ENCODE measurements at regions of chr16 and their contacts with region 1.

Region 1: GRCh38 chr16:67226804-67227557 is at the start of gene TMEM208:
- DNase-seq: peak; percentile 96 to 99 (median 98)
- ATAC-seq: peak; percentile 98
- H3K4me3 ChIP-seq: peak within 1 kb of the TSS; percentile 98
- H3K27ac ChIP-seq: peak within 1 kb of the TSS; percentile 74
- H3K4me1 ChIP-seq: peaks cover 18 to 20% of the 10 kb centered on the region in 2 experiments
- H3K27me3 ChIP-seq: no peaks in the 10 kb centered on the region
- CTCF ChIP-seq: peak in 2 of 3 experiments; percentile 27 to 28; a peak in 4 of 6 replicates
- EP300 ChIP-seq: 0 out of 2 replicates have a peak, but pooled peaks have one; percentile 19
- POLR2A ChIP-seq: peak; percentile 86
- RAD21 ChIP-seq: peak in 1 of 2 experiments; percentile 6; a peak in 1 of 4 replicates
- polyA plus RNA-seq, gene TMEM208: 233 to 239 TPM

Region 2: GRCh38 chr16:66705790-66706505 is 521.0 kb before region 1 on chr16:
- CTCF ChIA-PET with region 1: no interaction called
- POLR2A ChIA-PET with region 1: no interaction called
- in situ Hi-C with region 1: no loop called
- intact Hi-C with region 1: no loop called
- DNase-seq: no peak
- ATAC-seq: no peak
- H3K4me3 ChIP-seq: no peak overlapping the region
- H3K27ac ChIP-seq: no peak overlapping the region
- H3K4me1 ChIP-seq: peaks cover 0 to 4% of the 10 kb centered on the region in 2 experiments; a peak in 2 of 5 replicates
- H3K27me3 ChIP-seq: no peaks in the 10 kb centered on the region; a peak in 1 of 5 replicates
- CTCF ChIP-seq: no peak
- EP300 ChIP-seq: no peak
- POLR2A ChIP-seq: no peak
- RAD21 ChIP-seq: no peak

Region 3: DNA sequence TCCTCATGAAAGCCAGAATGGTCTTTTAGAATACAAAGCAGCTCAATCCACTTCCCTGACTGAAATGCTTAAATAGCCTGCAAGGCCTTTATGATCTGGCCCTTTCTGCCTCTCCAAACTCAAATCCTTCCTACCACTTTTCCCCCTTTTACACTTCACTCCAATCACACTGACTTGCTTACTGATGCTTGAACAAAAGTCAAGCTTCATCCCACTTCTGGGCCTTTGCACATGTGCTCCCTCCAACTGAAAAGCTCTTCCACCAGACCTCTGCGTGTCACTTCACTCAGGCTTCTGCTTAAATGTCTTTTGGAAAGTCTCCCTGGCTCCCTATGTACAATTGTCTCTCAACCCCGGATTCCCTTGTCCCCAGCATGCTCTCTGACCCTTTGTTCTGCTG is 412.2 kb before region 1 on chr16:
- CTCF ChIA-PET with region 1: no interaction called
- POLR2A ChIA-PET with region 1: no interaction called
- in situ Hi-C with region 1: no loop called
- intact Hi-C with region 1: no loop called
- DNase-seq: no peak
- ATAC-seq: no peak; the same call in 2 of the 3 replicates
- H3K4me3 ChIP-seq: no peak overlapping the region
- H3K27ac ChIP-seq: no peak overlapping the region
- H3K4me1 ChIP-seq: no peaks in the 10 kb centered on the region
- H3K27me3 ChIP-seq: no peaks in the 10 kb centered on the region
- CTCF ChIP-seq: no peak
- EP300 ChIP-seq: no peak
- POLR2A ChIP-seq: 0 out of 2 replicates have a peak, but pooled peaks have one; percentile 42
- RAD21 ChIP-seq: no peak

Region 4: GRCh38 chr16:67028555-67029248 is 198.3 kb before region 1 on chr16 and contains the start of gene CBFB:
- CTCF ChIA-PET with region 1: no interaction called
- POLR2A ChIA-PET with region 1: no interaction called
- in situ Hi-C with region 1: no loop called
- intact Hi-C with region 1: no loop called
- DNase-seq: peak; percentile 96 to 99 (median 98)
- ATAC-seq: peak; percentile 92
- H3K4me3 ChIP-seq: peak within 1 kb of the TSS; percentile 85
- H3K27ac ChIP-seq: peak within 1 kb of the TSS; percentile 97
- H3K4me1 ChIP-seq: peaks cover 13 to 29% of the 10 kb centered on the region in 2 experiments
- H3K27me3 ChIP-seq: no peaks in the 10 kb centered on the region
- CTCF ChIP-seq: peak; percentile 8 to 44 (median 12); a peak in 3 of 6 replicates
- EP300 ChIP-seq: peak; percentile 18
- POLR2A ChIP-seq: peak; percentile 98
- RAD21 ChIP-seq: peak in 1 of 2 experiments; percentile 2; a peak in 2 of 4 replicates
- polyA plus RNA-seq, gene CBFB: 22.0 to 40.7 TPM

Region 5: DNA sequence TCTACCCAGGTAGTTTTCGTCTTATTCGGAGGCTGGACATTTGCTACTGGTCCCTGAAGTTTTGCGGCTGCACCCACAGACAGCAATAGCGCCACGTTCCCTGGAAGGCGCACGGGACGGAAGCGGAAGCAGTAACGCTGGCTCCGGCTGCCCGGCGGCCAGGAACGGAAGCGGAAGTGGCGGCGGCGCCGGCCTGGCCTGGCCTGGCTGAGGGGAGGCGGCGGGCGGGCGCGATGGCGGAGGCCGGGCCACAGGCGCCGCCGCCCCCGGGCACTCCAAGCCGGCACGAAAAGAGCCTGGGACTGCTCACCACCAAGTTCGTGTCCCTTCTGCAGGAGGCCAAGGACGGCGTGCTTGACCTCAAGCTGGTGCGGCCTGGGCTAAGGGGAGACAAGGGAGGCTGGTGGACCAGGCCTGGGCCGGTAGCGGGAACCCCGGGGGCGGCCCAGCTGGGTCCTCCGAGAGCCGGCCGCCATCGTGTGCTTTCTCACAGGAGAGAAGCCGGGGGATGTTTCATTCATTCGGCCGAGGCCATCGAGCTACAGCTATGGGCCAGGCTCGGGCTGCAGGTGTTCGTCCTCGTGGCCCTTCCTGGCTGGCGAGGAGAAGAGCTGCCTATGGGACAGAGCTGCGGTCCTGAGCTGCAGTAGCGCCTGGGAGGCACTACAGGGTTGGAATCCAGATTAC is 34.8 kb before region 1 on chr16 and contains the start of gene E2F4:
- CTCF ChIA-PET with region 1: no interaction called
- POLR2A ChIA-PET with region 1: interaction called, 3 read pairs
- in situ Hi-C with region 1: no loop called
- intact Hi-C with region 1: loop called (anchors 5 kb)
- DNase-seq: peak; percentile 88 to 96 (median 90)
- ATAC-seq: peak; percentile 98
- H3K4me3 ChIP-seq: peak within 1 kb of the TSS; percentile 83
- H3K27ac ChIP-seq: peak within 1 kb of the TSS; percentile 63
- H3K4me1 ChIP-seq: peaks cover 38 to 69% of the 10 kb centered on the region in 2 experiments
- H3K27me3 ChIP-seq: no peaks in the 10 kb centered on the region
- CTCF ChIP-seq: no peak
- EP300 ChIP-seq: peak; percentile 41; the same call in 1 of the 2 replicates
- POLR2A ChIP-seq: peak; percentile 66; the same call in 1 of the 2 replicates
- RAD21 ChIP-seq: no peak
- polyA plus RNA-seq, gene E2F4: 9.7 to 18.9 TPM

Region 6: DNA sequence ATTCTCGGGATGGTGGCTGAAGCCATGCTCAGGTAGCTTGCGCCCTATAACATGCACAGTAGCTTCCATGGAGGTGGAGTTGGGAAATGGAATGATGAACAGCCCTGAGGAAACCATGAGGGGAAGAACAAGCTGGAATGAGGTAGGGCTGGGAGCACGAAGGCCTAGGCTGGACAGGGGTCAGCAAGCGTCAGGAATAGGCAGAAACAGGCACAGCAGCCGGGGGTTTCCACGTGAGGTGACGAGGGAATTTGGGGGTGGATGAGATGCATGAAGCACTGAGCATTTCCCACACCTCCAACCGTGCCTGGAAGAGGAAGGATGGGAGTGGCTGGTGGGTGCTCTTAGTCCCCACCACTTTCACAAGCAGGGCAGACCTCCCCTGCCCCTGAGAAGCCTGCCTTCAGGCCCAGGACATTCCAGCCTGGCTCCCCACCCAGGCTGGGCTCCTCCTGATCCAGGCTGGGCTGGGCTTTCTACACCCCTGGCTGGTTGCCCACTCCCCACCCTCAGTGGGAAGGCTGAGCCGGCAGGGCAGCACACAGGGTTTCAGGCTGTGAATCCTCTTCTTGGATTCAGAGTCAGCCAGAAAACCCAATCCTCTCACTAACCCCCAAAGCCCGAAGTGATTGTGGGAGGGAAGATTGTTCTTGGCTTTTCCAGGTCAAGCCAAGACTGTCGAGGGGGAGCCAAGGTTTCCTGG is 74.2 kb after region 1 on chr16:
- CTCF ChIA-PET with region 1: no interaction called
- POLR2A ChIA-PET with region 1: no interaction called
- in situ Hi-C with region 1: no loop called
- intact Hi-C with region 1: no loop called
- DNase-seq: no peak
- ATAC-seq: no peak
- H3K4me3 ChIP-seq: no peak overlapping the region
- H3K27ac ChIP-seq: no peak overlapping the region
- H3K4me1 ChIP-seq: peaks cover 0 to 10% of the 10 kb centered on the region in 2 experiments; a peak in 1 of 5 replicates
- H3K27me3 ChIP-seq: peaks cover 14 to 15% of the 10 kb centered on the region in 2 experiments; a peak in 4 of 5 replicates
- CTCF ChIP-seq: no peak
- EP300 ChIP-seq: no peak
- POLR2A ChIP-seq: no peak
- RAD21 ChIP-seq: no peak

Measured in K562 (cell line).